Panc1 (cell line): ENCODE measurements at regions of chr1 and their contacts with region 1.

Region 1: GRCh38 chr1:205227584-205228006 is at the start of gene TMCC2:
- DNase-seq: no peak
- ATAC-seq: peak; percentile 96
- H3K4me3 ChIP-seq: peak within 1 kb of the TSS; percentile 70 to 74
- H3K27ac ChIP-seq: peak within 1 kb of the TSS; percentile 65; the same call in 1 of the 2 replicates
- H3K4me1 ChIP-seq: peaks cover 9% of the 10 kb centered on the region
- H3K27me3 ChIP-seq: no peaks in the 10 kb centered on the region; the same call in 1 of the 2 replicates
- CTCF ChIP-seq: no peak
- total RNA-seq, gene TMCC2: 3.1 TPM

Region 2: GRCh38 chr1:204544321-204544720 is 683.3 kb before region 1 on chr1:
- CTCF ChIA-PET with region 1: no interaction called
- POLR2A ChIA-PET with region 1: no interaction called
- in situ Hi-C with region 1: no loop called
- intact Hi-C with region 1: no loop called
- DNase-seq: no peak
- ATAC-seq: no peak
- H3K4me3 ChIP-seq: no peak overlapping the region
- H3K27ac ChIP-seq: no peak overlapping the region
- H3K4me1 ChIP-seq: no peaks in the 10 kb centered on the region
- H3K27me3 ChIP-seq: no peaks in the 10 kb centered on the region
- CTCF ChIP-seq: no peak

Region 3: GRCh38 chr1:205121660-205122488 is 105.7 kb before region 1 on chr1 and contains the start of gene RBBP5:
- CTCF ChIA-PET with region 1: no interaction called
- POLR2A ChIA-PET with region 1: no interaction called
- in situ Hi-C with region 1: no loop called
- intact Hi-C with region 1: loop called (anchors 5 kb)
- DNase-seq: peak; percentile 97
- ATAC-seq: peak; percentile 100
- H3K4me3 ChIP-seq: peak within 1 kb of the TSS; percentile 96 to 97
- H3K27ac ChIP-seq: peak within 1 kb of the TSS; percentile 98
- H3K4me1 ChIP-seq: peaks cover 14% of the 10 kb centered on the region
- H3K27me3 ChIP-seq: no peaks in the 10 kb centered on the region
- CTCF ChIP-seq: peak; percentile 94
- total RNA-seq, gene RBBP5: 22.2 TPM